ENCODE measurements at regions of chr11 and their contacts with region 1.

Region 1: DNA sequence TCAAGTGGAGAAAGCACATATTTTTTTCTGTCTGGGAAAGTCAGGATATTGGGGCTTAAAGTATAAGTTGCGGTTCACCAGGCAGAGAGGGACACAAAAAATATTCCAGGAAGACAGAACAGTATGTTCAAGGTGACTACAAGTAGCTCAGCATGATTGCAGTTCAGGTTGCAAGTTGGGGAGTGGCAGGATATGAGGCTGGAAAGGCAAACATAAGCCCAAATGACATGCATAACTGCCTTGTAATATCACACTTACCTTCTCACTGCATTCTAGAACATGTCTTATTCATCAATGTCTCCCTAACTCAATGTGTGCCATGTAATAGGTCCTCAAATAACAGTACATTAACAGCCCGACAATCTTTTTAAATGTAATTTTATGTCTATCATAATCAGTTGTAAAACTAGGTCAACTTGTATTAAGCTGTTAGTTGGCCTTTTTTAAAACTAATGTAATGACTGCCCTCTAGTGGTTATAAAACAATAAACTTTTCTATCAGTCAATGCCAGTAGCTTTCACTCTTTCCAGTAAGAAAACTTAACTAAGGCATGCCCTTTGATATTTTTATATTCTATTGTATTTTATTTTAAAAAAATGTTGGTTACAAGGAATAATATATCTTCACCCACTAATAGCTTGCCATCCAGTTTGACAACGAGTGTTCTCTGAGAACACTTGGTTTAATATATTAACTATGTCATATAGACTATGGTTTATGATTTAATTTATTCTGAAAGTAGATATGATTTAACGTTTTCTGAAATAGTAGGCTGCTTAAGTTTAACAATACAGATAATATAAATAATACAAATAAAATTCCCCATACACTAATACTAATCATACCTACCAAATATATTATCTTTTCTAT is 39.4 kb upstream of the CFAP300 start:
- DNase-seq: no peak
- ATAC-seq: peak; percentile 81 to 89 (median 84)
- H3K4me3 ChIP-seq: no peak overlapping the region
- H3K27ac ChIP-seq: peak overlapping the region in 1 of 3 donors; percentile 29
- H3K4me1 ChIP-seq: peaks cover 0 to 7% (median 3%) of the 10 kb centered on the region in 4 donors
- H3K27me3 ChIP-seq: no peaks in the 10 kb centered on the region
- CTCF ChIP-seq: peak; percentile 59 to 71 (median 66)
- POLR2A ChIP-seq: no peak

Region 2: GRCh38 chr11:101860696-101861427 is 146.9 kb before region 1 on chr11:
- intact Hi-C with region 1: loop called (anchors 5 to 10 kb)
- DNase-seq: no peak
- ATAC-seq: peak; percentile 88 to 95 (median 91)
- H3K4me3 ChIP-seq: no peak overlapping the region
- H3K27ac ChIP-seq: no peak overlapping the region
- H3K4me1 ChIP-seq: peaks cover 0 to 3% (median 0%) of the 10 kb centered on the region in 4 donors
- H3K27me3 ChIP-seq: no peaks in the 10 kb centered on the region
- CTCF ChIP-seq: peak; percentile 67 to 83 (median 74)
- POLR2A ChIP-seq: no peak

Region 3: DNA sequence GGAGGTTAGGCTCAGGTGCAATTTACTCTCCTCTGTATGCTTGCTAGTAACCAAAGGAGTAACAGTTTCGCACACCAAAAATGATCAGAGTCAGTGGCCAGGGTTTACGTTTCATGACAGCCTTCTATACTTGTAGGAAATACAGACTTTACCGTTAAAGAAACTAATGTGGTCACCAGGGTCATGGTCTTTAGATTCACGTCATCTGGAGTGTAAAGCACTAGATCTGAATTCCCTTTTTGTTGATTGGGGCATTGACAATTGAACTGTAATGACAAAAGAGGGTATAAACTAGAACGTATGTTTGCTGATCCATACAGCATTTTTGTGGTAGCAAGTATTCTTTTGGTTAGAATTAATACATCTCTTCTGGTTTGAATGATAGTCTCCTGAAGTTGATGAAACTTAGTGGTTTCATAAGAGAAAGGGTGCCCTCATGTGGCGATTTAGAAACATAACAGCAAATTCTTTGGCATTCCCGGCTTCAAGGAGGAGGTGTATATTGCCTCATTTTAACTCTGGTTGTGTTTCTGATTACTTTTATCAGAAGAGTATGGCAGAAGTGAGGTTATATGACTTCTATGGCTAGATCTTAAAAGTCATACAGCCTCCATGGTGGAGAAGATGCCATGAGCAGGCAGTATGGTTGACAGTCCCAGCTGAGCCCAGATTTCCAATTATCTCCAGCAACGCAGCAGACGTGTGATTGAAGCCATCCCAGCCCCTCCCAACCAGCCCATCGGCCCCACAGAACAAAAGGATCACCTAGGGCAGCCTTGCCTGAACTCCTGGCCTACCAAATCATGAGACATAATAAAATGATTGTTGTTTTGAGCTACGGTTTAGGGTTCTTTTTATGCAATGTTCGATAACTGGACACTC is 487.6 kb after region 1 on chr11:
- intact Hi-C with region 1: no loop called
- DNase-seq: peak in 1 of 3 donors; percentile 52
- ATAC-seq: peak; percentile 86 to 94 (median 88)
- H3K4me3 ChIP-seq: no peak overlapping the region
- H3K27ac ChIP-seq: peak overlapping the region in 2 of 3 donors; percentile 1 to 37
- H3K4me1 ChIP-seq: peaks cover 0 to 14% (median 6%) of the 10 kb centered on the region in 4 donors
- H3K27me3 ChIP-seq: no peaks in the 10 kb centered on the region
- CTCF ChIP-seq: peak; percentile 58 to 83 (median 74)
- POLR2A ChIP-seq: no peak